Spleen (tissue), 13 donors: ENCODE measurements at regions of chr3 and their contacts with region 1.

Region 1: DNA sequence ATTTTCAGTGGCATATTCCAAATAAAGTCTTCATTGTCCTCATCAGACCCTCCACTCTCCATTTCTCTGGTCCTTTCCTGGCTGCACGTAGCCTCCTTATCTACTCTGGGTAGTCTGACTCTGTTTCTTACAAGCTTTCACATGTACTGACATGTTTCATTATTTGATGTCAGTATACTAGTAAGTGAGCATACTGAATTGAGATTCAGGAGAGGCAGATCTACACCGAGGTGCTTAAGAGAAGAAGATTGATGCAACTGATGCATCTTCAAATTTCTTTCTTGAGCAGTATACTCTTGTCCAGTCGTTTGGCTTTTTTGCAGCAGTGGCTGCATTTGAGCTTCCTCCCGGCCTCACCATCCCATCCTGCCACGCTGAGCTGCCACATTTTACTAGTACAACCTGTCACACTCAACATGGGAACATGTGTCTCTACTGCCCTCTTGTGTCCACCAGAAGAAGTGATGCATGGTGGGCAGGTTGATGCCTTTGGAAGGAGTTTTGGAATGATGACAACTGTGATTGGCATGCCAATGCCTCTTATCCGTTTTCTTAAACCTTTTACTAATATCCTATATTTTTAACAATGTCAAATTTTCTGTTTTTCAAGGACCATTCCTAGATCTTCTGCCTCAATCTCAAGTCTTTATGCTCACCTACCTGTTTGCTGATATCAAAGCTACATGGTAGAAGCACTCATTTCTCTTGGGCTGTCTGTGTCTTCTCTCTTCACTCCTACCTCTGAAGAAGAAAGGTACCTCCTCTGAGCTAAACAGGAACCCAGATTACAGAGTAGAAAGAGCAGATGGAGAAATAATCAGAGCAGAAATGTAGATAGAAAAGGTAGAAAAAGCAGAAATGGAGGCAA is 38.7 kb downstream of the GUCA1C start:
- DNase-seq: peak; percentile 79
- H3K4me3 ChIP-seq: peak overlapping the region in 1 of 8 donors; percentile 6
- H3K27ac ChIP-seq: no peak overlapping the region
- H3K4me1 ChIP-seq: peaks cover 0 to 6% (median under 1%) of the 10 kb centered on the region in 6 donors
- H3K27me3 ChIP-seq: peaks cover 0 to 7% (median 0%) of the 10 kb centered on the region in 7 donors
- CTCF ChIP-seq: peak; percentile 63 to 87 (median 81)
- POLR2A ChIP-seq: no peak

Region 2: GRCh38 chr3:108662130-108662738 is 252.8 kb before region 1 on chr3:
- intact Hi-C with region 1: loop called (anchors 5 kb)
- DNase-seq: no peak
- H3K4me3 ChIP-seq: peak overlapping the region in 1 of 8 donors; percentile 10
- H3K27ac ChIP-seq: no peak overlapping the region
- H3K4me1 ChIP-seq: peaks cover 0 to 11% (median 8%) of the 10 kb centered on the region in 6 donors
- H3K27me3 ChIP-seq: no peaks in the 10 kb centered on the region
- CTCF ChIP-seq: peak; percentile 29 to 81 (median 66)
- POLR2A ChIP-seq: no peak

Region 3: DNA sequence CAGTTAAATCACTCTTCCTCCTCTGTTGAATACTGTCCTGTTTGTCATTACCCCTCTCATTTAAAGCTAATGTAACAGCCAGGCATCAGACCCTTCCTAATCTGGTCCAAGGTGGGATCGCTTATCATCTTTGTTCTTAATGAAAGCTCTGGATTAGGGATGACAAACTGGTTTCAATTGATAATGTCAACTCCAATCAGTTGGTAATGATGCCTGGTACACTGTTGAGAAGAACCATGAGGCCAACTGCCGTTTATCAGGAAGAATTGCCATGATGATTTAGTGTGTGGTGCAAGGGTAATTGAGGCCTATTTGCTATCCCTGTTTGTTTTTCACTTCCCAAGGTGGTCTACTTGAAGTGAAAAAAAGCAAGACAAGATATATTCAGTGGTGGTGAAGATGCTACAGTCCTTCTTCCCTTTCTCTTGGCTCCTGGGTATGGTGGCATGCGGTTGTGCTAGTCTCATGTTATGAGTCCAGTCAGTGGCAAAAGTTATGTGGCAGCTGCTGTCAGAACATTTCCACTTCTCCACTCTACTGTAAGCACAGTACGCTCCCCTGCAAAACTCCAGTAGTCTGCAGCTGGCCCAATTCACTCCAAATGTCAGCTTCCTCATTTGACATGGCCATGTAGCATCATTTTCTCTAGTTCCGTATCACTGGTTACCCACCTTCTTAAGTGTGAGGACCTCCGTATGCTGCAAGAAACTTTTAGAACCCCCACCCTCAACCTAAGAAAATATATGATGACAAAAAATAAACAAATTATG is 130.4 kb after region 1 on chr3:
- intact Hi-C with region 1: no loop called
- DNase-seq: no peak
- H3K4me3 ChIP-seq: no peak overlapping the region
- H3K27ac ChIP-seq: no peak overlapping the region
- H3K4me1 ChIP-seq: no peaks in the 10 kb centered on the region
- H3K27me3 ChIP-seq: no peaks in the 10 kb centered on the region
- CTCF ChIP-seq: no peak
- POLR2A ChIP-seq: no peak